Right cardiac atrium (tissue), 5 donors: ENCODE measurements at regions of chr9 and their contacts with region 1.

Region 1: DNA sequence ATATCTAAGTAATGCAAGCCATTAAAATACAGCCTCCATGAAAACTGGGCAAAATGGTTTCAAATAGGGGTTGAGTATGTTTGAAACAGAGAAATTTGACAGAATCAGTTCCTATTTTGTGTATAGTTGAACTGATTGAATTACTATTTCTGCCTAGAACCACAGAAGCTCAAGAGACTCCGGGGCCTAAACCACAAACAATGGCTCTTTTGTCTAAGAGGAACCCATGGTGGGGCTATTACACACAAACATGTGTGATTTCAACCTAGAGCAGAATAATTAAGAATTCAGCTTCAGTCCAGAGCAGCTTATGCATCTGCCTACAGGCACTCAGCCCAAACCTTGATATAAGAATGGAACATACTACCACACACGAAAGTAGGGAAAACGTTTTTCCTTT is 171.2 kb upstream of the MPDZ start:
- DNase-seq: no peak
- ATAC-seq: no peak
- H3K4me3 ChIP-seq: no peak overlapping the region
- H3K27ac ChIP-seq: no peak overlapping the region
- H3K4me1 ChIP-seq: no peaks in the 10 kb centered on the region
- H3K27me3 ChIP-seq: no peaks in the 10 kb centered on the region

Region 2: GRCh38 chr9:13568841-13569601 is 118.3 kb after region 1 on chr9:
- intact Hi-C with region 1: loop called in 3 of 4 experiments (anchors 10 kb)
- DNase-seq: peak; percentile 15 to 54 (median 48)
- ATAC-seq: peak; percentile 14 to 38
- H3K4me3 ChIP-seq: peak overlapping the region; percentile 37
- H3K27ac ChIP-seq: peak overlapping the region; percentile 99
- H3K4me1 ChIP-seq: peaks cover 7% of the 10 kb centered on the region
- H3K27me3 ChIP-seq: no peaks in the 10 kb centered on the region

Region 3: GRCh38 chr9:13607481-13608441 is 157.0 kb after region 1 on chr9:
- intact Hi-C with region 1: no loop called
- DNase-seq: no peak
- ATAC-seq: peak; percentile 73 to 85
- H3K4me3 ChIP-seq: peak overlapping the region; percentile 53
- H3K27ac ChIP-seq: peak overlapping the region; percentile 94
- H3K4me1 ChIP-seq: no peaks in the 10 kb centered on the region
- H3K27me3 ChIP-seq: no peaks in the 10 kb centered on the region

Region 4: GRCh38 chr9:13688994-13689600 is 238.4 kb after region 1 on chr9:
- intact Hi-C with region 1: loop called in 2 of 4 experiments (anchors 10 kb)
- DNase-seq: peak in 1 of 3 donors; percentile 58
- ATAC-seq: no peak
- H3K4me3 ChIP-seq: no peak overlapping the region
- H3K27ac ChIP-seq: no peak overlapping the region
- H3K4me1 ChIP-seq: peaks cover 5% of the 10 kb centered on the region
- H3K27me3 ChIP-seq: no peaks in the 10 kb centered on the region

Region 5: DNA sequence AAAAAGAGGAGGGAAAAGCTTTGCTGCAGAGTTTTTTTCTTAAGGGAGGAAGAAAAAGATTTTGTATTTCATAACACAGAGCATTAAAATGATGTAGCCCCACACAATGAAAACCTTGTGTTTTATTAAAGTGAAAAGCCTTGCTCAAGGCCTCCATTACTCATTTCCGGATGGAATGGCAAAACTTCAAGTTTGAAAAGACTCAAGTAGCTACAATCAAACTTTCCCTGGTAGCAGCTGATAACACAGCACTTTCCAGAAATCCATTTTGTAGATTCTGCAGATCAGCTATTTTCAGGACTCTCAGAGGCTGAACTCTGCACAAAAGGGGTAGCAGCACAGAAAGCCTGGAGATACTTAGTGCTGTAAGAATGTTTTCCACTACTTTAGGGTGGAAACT is 488.4 kb after region 1 on chr9:
- intact Hi-C with region 1: loop called in 1 of 4 experiments (anchors 10 kb)
- DNase-seq: no peak
- ATAC-seq: peak; percentile 87 to 91
- H3K4me3 ChIP-seq: no peak overlapping the region
- H3K27ac ChIP-seq: peak overlapping the region; percentile 70
- H3K4me1 ChIP-seq: peaks cover 3% of the 10 kb centered on the region
- H3K27me3 ChIP-seq: no peaks in the 10 kb centered on the region

Region 6: GRCh38 chr9:14096258-14096922 is 645.7 kb after region 1 on chr9:
- intact Hi-C with region 1: loop called in 1 of 4 experiments (anchors 10 kb)
- DNase-seq: peak in 2 of 3 donors; percentile 22 to 47
- ATAC-seq: peak; percentile 82 to 90
- H3K4me3 ChIP-seq: peak overlapping the region; percentile 55
- H3K27ac ChIP-seq: peak overlapping the region; percentile 77
- H3K4me1 ChIP-seq: peaks cover 5% of the 10 kb centered on the region
- H3K27me3 ChIP-seq: no peaks in the 10 kb centered on the region